CD8-positive, alpha-beta memory T cell (primary cell): ENCODE measurements at regions of chr17 and their contacts with region 1.

Region 1: DNA sequence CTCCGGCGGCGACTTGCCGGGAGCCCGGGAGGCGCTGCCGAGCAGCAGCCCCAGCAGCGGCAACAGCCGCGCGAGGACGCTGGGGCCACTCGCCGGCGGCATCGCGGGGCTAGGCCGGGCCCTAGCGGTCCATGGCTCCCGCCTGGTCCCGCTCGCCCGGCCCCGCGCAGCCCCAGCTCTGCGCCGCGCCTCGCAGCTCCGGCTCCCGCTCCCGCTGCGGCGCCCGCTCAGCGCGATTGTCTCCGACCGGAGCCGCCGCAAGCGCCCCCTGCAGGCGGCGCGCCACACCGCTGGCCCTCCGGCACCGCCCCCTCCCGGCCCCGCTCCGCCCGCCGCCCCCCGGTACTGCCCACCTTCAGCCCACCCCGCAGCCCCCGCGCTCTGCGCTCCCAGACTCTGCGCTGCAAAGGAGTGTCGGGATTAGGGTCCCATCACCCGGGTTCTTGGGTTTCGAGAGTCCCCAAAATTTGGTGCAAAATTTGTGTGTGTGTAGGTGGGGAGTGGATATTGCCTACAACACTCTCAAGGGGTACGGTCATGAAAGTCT is at the start of gene FAM171A2:
- DNase-seq: peak; percentile 61 to 76 (median 64)
- H3K4me3 ChIP-seq: peak within 1 kb of the TSS; percentile 53
- H3K4me3 Mint-ChIP-seq: peak within 1 kb of the TSS; percentile 20 to 88 (median 79)
- H3K27ac ChIP-seq: peak within 1 kb of the TSS; percentile 43
- H3K27ac Mint-ChIP-seq: peak within 1 kb of the TSS in 2 of 8 donors; percentile 56 to 78
- H3K4me1 ChIP-seq: no peaks in the 10 kb centered on the region
- H3K4me1 Mint-ChIP-seq: peaks cover 0 to 7% (median 3%) of the 10 kb centered on the region in 3 donors
- H3K27me3 ChIP-seq: no peaks in the 10 kb centered on the region
- H3K27me3 Mint-ChIP-seq: peaks cover 26 to 45% of the 10 kb centered on the region in 2 donors
- total RNA-seq, gene FAM171A2: 0.33 to 0.35 TPM

Region 2: DNA sequence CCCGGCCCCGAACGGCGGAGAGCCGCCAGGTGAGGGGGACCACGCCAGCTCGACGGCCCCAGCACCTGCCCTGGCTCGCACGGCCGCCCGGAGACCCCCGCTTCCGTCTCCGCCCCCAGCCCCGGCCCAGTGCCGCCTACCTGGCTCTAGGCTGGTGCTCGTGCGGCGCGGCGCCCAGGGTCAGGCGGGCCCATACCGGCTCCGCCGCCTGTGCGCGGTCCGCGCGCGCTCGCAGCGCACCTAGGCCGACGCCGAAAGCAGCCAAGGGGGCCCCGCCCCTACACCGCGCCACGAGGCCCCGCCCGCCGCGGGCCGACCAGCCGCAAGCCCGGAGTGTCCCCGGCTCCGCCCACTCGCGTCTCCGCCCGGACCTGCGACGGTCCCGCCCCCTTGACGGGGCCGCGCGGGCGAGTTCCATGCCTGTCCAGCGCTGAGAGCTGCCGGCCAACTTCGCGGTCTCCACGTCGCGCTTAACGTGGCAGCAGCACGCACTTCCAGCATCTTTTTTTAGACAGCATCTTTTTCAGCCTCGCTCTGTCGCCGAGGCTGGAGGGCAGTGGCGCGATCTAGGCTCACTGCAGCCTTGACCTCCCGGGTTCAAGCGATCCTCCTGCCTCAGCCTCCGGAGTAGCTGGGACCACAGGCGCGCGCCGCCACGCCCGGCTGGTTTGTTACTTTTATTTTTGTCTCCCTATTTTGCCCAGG is 39.0 kb before region 1 on chr17 and contains the start of gene SLC25A39:
- CTCF ChIA-PET with region 1: no interaction called
- POLR2A ChIA-PET with region 1: no interaction called
- DNase-seq: peak; percentile 92 to 96 (median 94)
- H3K4me3 ChIP-seq: peak within 1 kb of the TSS; percentile 94
- H3K4me3 Mint-ChIP-seq: peak within 1 kb of the TSS; percentile 91 to 98 (median 92)
- H3K27ac ChIP-seq: peak within 1 kb of the TSS; percentile 93
- H3K27ac Mint-ChIP-seq: peak within 1 kb of the TSS; percentile 92 to 99 (median 97)
- H3K4me1 ChIP-seq: peaks cover 21% of the 10 kb centered on the region
- H3K4me1 Mint-ChIP-seq: peaks cover 26 to 31% (median 30%) of the 10 kb centered on the region in 3 donors
- H3K27me3 ChIP-seq: no peaks in the 10 kb centered on the region
- H3K27me3 Mint-ChIP-seq: peaks cover 0 to 2% of the 10 kb centered on the region in 2 donors
- total RNA-seq, gene SLC25A39: 159 to 174 TPM

Region 3: GRCh38 chr17:44344939-44345453 is 18.7 kb before region 1 on chr17 and contains the start of gene GRN:
- CTCF ChIA-PET with region 1: interaction called, 31 read pairs
- POLR2A ChIA-PET with region 1: no interaction called
- DNase-seq: peak; percentile 72 to 87 (median 80)
- H3K4me3 ChIP-seq: peak within 1 kb of the TSS; percentile 89
- H3K4me3 Mint-ChIP-seq: peak within 1 kb of the TSS; percentile 91 to 96 (median 93)
- H3K27ac ChIP-seq: peak within 1 kb of the TSS; percentile 47
- H3K27ac Mint-ChIP-seq: peak within 1 kb of the TSS; percentile 13 to 90 (median 72)
- H3K4me1 ChIP-seq: peaks cover 10% of the 10 kb centered on the region
- H3K4me1 Mint-ChIP-seq: peaks cover 20 to 28% (median 21%) of the 10 kb centered on the region in 3 donors
- H3K27me3 ChIP-seq: no peaks in the 10 kb centered on the region
- H3K27me3 Mint-ChIP-seq: peaks cover 8 to 15% of the 10 kb centered on the region in 2 donors
- total RNA-seq, gene GRN: 48.7 to 50.3 TPM

Region 4: GRCh38 chr17:44350733-44351226 is 12.9 kb before region 1 on chr17:
- CTCF ChIA-PET with region 1: interaction called, 31 read pairs
- POLR2A ChIA-PET with region 1: interaction called, 15 read pairs
- DNase-seq: peak; percentile 49 to 75 (median 60)
- H3K4me3 ChIP-seq: no peak overlapping the region
- H3K4me3 Mint-ChIP-seq: peak overlapping the region in 2 of 7 donors; percentile 32 to 45
- H3K27ac ChIP-seq: no peak overlapping the region
- H3K27ac Mint-ChIP-seq: no peak overlapping the region
- H3K4me1 ChIP-seq: peaks cover 11% of the 10 kb centered on the region
- H3K4me1 Mint-ChIP-seq: peaks cover 12 to 30% (median 17%) of the 10 kb centered on the region in 3 donors
- H3K27me3 ChIP-seq: no peaks in the 10 kb centered on the region
- H3K27me3 Mint-ChIP-seq: peaks cover 0 to 4% of the 10 kb centered on the region in 2 donors